Activated naive CD4-positive, alpha-beta T cell treated with anti-CD3 and anti-CD28 coated beads, Interleukin-2, amount 10 ng/mL, durations not matched to agents 7 days and 5 days (primary cell): ENCODE measurements at regions of chr7 and their contacts with region 1.

Region 1: GRCh38 chr7:150420987-150421674 is 29.3 kb upstream of the GIMAP8 start:
- DNase-seq: peak; percentile 89
- H3K4me3 Mint-ChIP-seq: no peak overlapping the region
- H3K27ac Mint-ChIP-seq: no peak overlapping the region
- H3K4me1 Mint-ChIP-seq: peaks cover 13% of the 10 kb centered on the region
- H3K27me3 Mint-ChIP-seq: peaks cover 24% of the 10 kb centered on the region

Region 2: DNA sequence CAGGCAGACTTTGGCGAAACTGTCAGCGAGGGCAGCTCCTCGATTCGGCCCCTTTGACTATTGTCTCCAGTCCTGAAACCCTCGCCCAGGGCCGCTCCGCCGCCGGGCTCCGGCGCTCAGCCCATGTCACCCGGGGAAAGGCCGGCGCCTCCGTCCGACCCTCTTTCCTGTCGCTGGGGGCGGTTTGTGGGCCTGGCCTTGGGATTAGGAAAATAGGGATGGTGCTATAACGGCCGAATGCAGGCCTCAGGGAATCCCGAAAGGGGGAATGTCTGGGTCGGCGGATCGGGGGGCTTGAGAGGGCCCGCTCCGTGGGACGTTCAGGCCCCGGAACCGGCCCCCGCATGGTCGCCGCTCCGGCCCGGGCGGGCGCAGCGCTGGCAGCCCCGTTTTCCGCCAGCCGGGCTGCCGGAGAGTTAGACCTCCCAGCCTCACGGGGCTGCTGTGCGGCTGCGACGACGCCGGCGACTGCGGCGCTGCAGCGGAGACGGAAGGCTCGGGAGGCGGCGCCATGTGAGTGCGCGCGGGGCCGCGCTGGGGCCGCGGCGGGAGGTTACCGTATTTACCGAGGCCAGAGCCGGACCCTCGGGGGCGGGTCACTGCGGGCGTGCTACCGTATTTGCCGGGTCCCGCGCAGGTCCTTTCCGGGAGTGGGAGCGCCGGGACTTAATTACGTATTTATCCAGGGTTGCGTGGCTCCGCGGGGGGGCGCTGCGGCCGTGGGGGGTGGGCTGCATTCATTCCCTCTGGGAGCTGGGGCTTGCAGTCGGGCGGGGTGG is 16.1 kb before region 1 on chr7:
- CTCF ChIA-PET with region 1: interaction called, 22 read pairs
- DNase-seq: peak; percentile 86
- H3K4me3 Mint-ChIP-seq: peak overlapping the region; percentile 80
- H3K27ac Mint-ChIP-seq: peak overlapping the region; percentile 95
- H3K4me1 Mint-ChIP-seq: peaks cover 50% of the 10 kb centered on the region
- H3K27me3 Mint-ChIP-seq: no peaks in the 10 kb centered on the region

Region 3: GRCh38 chr7:150466477-150466876 is 45.3 kb after region 1 on chr7:
- CTCF ChIA-PET with region 1: no interaction called
- DNase-seq: no peak
- H3K4me3 Mint-ChIP-seq: no peak overlapping the region
- H3K27ac Mint-ChIP-seq: no peak overlapping the region
- H3K4me1 Mint-ChIP-seq: peaks cover 85% of the 10 kb centered on the region
- H3K27me3 Mint-ChIP-seq: no peaks in the 10 kb centered on the region